Activated T-helper 1 cell treated with anti-CD3 and anti-CD28 coated beads, Interleukin-12 subunit alpha, Interleukin-12 subunit beta, Interleukin-2, Interleukin-4 antibody, amounts not matched to agents 30 ng/mL and 10 ng/mL and 1 ng/mL, durations not matched to agents 14 hours and 24 hours and 36 hours (primary cell): ENCODE measurements at regions of chr2 and their contacts with region 1.

Region 1: DNA sequence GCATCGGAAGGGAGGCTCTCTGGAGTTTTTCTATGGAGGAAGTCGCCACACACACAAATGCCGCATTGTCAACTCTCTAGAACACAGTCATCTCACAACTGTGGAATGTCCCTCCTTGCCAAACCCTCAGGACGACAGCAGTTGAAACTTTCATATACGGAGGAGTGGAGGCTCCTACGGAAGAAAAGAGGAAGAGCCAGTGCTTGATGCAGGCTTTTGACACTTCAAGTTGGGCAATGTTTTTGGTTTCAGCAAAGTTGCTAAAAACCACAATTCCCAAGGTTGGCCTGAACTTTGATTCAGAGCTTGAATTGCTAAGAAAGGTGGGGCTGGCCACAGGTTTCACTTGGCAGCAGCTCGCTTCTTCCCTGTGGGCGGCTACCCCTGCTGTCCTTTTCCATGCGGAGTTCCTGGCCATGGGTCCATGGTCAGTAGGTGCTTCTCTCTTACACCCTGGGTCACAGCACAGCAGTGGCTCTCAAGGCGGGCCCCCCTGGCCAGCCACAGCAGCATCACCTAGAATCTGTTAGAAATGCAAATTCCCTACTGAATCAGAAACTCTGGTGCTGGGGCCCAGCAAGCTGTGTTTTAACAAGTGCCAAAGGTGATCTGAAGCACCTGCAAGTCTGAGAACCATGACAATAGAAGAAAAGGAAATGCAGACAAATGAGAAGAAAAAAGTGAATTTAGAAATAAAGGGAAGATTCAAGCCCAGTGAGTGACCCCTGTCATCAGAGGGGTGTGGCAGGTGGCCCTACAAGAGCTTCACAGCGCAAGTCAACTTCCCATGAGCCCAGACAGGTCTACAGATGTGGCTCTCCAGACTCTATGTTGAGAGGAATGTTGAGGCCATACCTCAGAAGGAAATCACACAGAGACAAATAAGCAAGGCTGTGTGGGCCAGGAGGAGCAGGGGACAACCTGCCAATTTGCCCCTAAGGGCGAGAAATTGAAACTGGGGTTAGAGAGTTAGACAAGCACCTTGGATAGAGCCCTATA is 856.4 kb downstream of the RNF144A start:
- DNase-seq: peak; percentile 39
- H3K4me3 Mint-ChIP-seq: peak overlapping the region; percentile 28
- H3K27ac Mint-ChIP-seq: peak overlapping the region; percentile 91
- H3K4me1 Mint-ChIP-seq: peaks cover 41% of the 10 kb centered on the region
- H3K27me3 Mint-ChIP-seq: no peaks in the 10 kb centered on the region

Region 2: DNA sequence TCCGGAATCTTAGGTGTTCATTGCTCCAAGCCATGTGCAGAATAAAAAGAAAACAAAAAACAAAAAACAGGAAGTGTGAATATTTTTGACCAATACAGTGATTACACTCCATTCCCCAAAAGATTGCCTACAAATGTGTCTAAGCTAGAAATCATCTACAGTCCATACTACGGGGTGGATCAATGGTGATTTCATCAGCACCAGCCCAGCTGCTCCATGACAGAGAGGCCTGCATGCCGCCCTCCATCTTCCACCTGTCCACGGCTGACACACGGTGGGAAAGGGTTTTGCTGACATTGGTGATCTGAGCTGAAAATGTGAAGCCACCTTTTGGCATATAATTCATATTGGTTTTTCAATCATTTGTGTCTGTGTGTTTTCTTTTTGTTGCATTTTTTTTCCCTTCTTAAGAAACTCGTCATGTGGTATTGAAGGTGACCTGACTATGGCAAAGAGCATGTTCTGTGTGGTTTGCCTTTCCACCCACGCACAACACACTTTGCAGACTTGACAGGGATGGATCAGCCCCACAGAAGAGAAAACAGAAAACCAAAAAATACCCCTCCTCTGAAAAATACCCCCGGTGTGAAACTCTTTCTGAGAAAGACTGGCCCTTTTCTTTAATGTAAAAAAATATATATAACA is 323.4 kb before region 1 on chr2:
- intact Hi-C with region 1: loop called (anchors 1 kb)
- DNase-seq: peak; percentile 65
- H3K4me3 Mint-ChIP-seq: peak overlapping the region; percentile 9
- H3K27ac Mint-ChIP-seq: peak overlapping the region; percentile 98
- H3K4me1 Mint-ChIP-seq: peaks cover 90% of the 10 kb centered on the region
- H3K27me3 Mint-ChIP-seq: no peaks in the 10 kb centered on the region

Region 3: DNA sequence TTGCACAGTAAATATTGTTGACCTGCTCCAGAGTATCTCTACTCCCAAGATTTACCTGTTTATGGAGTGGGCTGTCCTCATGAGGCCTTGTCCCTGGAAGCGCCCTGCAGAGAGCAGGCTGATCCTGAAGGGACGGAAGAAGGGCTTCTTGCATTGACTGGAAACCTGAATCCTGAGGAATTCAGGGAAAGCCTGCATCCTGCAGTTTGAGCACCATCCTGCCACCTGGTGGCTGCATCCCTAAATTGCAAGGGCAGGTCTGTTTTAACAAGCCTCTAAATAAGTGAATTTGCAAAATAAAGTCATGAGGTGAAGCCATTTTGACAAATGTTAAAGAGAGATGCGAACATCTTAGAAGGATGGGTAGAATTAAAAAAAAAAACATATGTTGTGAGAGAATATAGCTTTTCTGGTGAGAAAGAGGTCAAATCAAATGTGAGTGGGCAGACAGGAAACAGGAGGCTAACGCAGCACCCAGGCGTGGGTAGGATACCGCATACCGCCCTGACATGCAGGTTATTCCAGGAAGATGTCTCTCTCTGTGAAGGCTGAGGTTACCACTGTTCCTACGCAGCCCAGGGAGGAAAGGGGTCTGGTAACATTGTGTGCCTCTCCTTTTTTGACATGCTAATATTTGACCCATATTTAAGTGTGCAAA is 101.5 kb before region 1 on chr2:
- intact Hi-C with region 1: loop called (anchors 1 kb)
- DNase-seq: peak; percentile 43
- H3K4me3 Mint-ChIP-seq: peak overlapping the region; percentile 71
- H3K27ac Mint-ChIP-seq: peak overlapping the region; percentile 93
- H3K4me1 Mint-ChIP-seq: peaks cover 79% of the 10 kb centered on the region
- H3K27me3 Mint-ChIP-seq: no peaks in the 10 kb centered on the region

Region 4: GRCh38 chr2:7744827-7745226 is 28.8 kb before region 1 on chr2:
- intact Hi-C with region 1: loop called (anchors 1 kb)
- DNase-seq: peak; percentile 35
- H3K4me3 Mint-ChIP-seq: peak overlapping the region; percentile 8
- H3K27ac Mint-ChIP-seq: peak overlapping the region; percentile 81
- H3K4me1 Mint-ChIP-seq: peaks cover 44% of the 10 kb centered on the region
- H3K27me3 Mint-ChIP-seq: no peaks in the 10 kb centered on the region

Region 5: DNA sequence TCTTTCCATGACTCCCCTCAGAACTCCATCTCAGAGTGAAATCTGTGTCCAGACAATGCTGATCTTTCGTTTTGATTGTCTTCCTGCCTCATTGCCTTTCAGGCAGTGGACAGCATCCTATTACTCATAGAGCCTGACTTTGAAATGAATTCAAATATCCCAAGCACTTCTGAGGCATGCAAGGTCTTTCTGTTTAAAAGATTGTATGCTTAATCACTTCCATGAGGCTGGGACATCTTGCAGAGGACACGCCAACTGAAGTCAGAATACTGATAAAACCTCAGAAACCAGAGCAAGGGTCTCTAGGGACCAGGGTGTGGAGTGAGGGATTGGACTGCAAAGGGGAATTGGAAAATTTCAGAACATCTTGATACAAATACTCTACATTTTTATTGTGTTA is 71.7 kb after region 1 on chr2:
- intact Hi-C with region 1: loop called (anchors 1 kb)
- DNase-seq: no peak
- H3K4me3 Mint-ChIP-seq: no peak overlapping the region
- H3K27ac Mint-ChIP-seq: no peak overlapping the region
- H3K4me1 Mint-ChIP-seq: peaks cover 57% of the 10 kb centered on the region
- H3K27me3 Mint-ChIP-seq: no peaks in the 10 kb centered on the region

Region 6: DNA sequence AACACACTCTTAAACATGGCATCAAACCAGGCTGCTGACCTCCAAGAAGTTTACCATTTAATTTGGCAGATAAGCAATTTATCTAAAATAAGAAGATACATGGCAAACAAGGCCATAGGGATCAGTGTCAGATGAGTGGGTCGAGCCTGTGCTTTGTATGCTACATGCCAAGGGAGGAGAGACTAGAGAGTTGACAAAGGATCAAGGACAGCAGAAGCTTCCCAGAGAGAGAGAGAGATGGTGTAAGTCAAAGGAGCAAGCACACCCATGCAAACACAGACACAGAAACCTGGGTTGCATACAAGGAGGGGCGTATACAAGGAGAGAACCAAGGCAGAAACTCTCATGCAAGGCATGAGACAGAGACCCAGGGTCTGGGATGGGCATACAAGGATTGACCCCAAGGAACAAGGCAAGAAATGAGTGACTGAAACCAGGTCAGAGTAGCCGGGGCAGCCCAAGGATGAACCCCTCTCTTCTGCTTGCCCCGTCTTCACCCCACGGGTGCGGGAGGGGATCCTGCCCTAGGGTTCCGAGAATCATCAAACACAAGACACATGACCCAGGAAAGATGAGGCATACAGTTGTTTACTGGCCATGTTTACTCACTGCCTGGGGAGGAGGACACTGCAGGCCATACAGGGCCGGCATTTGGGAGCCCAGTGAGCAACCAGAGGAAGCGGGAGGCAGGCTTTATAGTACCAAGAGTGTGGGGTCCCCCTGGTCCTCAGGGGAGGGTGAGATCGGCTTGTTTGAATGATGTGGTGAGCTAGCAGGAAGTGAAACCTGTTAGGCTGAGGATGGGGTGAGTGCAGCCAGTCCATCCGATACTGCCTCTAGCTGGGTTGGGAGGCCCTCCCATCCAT is 379.0 kb after region 1 on chr2:
- intact Hi-C with region 1: loop called (anchors 1 kb)
- DNase-seq: no peak
- H3K4me3 Mint-ChIP-seq: no peak overlapping the region
- H3K27ac Mint-ChIP-seq: peak overlapping the region; percentile 62
- H3K4me1 Mint-ChIP-seq: peaks cover 38% of the 10 kb centered on the region
- H3K27me3 Mint-ChIP-seq: no peaks in the 10 kb centered on the region

Region 7: DNA sequence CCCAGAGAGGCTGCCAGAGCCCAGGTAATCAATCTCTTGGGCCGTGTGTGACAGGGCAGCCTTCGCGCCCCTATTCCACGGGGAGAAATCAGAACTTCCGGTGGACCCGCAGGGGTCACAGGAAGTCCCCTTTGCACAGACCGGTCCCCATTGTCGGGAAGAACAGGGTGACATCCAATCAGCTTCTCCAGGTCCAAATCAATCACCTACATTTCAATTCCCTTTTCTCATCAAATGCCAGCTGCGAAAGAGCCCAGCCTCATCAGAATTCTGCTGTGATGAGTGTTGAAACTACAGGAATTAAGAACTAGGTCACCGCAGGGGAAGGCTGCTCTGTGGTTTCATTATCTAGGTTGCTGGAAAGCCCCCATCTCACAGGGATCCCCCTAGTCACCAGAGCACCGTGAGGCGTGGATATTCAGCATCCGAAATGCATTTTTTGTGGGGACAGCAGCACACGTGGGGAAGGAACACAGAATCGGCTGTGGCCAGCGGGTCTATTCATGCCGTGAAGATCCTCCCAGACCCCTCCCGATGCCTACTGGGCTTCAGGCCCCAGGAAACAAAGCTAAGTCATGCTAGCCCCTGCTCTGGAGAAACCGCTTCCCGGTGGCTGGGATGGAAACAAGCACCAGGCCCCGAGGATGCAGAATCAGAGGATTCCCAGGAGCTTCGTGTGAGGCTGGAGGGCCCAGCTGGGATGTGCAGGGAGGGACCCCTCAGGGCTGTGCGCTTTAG is 714.5 kb after region 1 on chr2:
- intact Hi-C with region 1: loop called (anchors 10 kb)
- DNase-seq: peak; percentile 57
- H3K4me3 Mint-ChIP-seq: peak overlapping the region; percentile 75
- H3K27ac Mint-ChIP-seq: peak overlapping the region; percentile 86
- H3K4me1 Mint-ChIP-seq: peaks cover 61% of the 10 kb centered on the region
- H3K27me3 Mint-ChIP-seq: no peaks in the 10 kb centered on the region